ENCODE measurements at regions of chr11 and their contacts with region 1.

Region 1: DNA sequence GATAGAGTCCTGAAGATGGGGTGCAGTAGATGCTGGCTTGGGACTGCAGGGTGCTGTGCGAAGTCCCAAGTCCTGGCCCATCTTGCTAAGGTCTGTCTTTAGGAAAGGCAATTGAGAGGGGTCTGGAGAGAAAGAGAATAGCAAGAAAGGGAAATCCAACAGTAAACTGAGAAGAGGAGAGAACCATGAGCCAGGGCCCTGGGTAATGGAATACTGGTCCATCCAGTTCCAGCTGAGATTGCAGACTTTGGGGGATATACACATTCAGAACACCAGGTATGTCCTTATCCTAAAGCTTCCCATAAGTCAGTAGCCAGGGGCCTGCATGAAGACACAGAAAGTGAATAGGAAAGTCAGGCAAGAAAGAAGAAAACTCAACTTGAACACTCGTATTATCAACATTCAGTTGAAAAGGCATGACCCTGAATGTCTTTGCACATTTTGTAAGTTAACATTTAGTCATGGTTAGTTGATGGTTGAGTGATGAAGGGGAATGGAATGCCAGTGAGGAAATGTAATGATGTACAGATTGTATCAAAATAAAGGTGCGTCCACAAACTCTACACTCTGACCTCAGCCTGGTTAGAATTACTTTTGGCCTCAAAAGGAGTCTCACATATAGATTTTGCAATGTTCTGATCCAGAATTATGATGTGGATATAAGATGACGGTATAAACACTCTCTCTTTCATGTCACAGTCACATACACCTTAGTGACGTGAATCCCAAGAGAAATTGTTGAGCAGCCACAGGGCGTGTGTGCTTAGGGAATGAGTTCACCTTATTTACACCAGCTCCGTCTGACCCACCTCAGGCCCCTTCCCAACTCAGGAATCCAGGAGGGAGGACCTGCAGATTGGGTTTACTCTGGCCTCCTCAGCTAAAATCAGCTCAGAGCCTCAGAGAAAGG is 100.3 kb downstream of the RDX start:
- DNase-seq: peak; percentile 51 to 70
- H3K4me3 ChIP-seq: no peak overlapping the region
- H3K4me3 Mint-ChIP-seq: no peak overlapping the region
- H3K27ac Mint-ChIP-seq: peak overlapping the region; percentile 23
- H3K4me1 ChIP-seq: peaks cover 21% of the 10 kb centered on the region
- H3K4me1 Mint-ChIP-seq: peaks cover 29% of the 10 kb centered on the region
- H3K27me3 ChIP-seq: no peaks in the 10 kb centered on the region
- H3K27me3 Mint-ChIP-seq: no peaks in the 10 kb centered on the region
- CTCF ChIP-seq: no peak

Region 2: DNA sequence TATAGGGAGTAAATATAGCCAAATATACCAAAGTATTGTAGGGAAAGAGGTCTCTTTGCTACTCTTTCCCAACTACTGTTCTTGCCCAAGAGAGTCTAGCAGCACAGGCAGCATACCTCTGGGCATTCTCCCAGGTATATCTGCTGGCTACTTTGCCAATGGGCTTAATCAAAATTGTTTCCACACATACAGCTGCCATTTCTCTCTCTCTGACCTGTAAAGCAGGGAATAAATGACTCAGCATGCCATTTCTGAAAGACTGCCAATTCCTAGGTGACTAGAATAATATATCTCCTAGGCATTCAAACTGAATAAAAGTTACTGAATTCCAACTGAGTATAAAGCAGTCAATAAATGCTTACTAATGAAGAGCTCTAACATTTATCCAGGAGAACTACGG is 55.7 kb after region 1 on chr11:
- CTCF ChIA-PET with region 1: interaction called, 8 read pairs
- POLR2A ChIA-PET with region 1: no interaction called
- intact Hi-C with region 1: loop called (anchors 1 kb)
- DNase-seq: no peak
- H3K4me3 ChIP-seq: no peak overlapping the region
- H3K4me3 Mint-ChIP-seq: no peak overlapping the region
- H3K27ac Mint-ChIP-seq: no peak overlapping the region
- H3K4me1 ChIP-seq: no peaks in the 10 kb centered on the region
- H3K4me1 Mint-ChIP-seq: no peaks in the 10 kb centered on the region
- H3K27me3 ChIP-seq: no peaks in the 10 kb centered on the region
- H3K27me3 Mint-ChIP-seq: no peaks in the 10 kb centered on the region
- CTCF ChIP-seq: no peak

Region 3: GRCh38 chr11:110362971-110363509 is 166.9 kb after region 1 on chr11:
- CTCF ChIA-PET with region 1: interaction called, 11 read pairs
- POLR2A ChIA-PET with region 1: no interaction called
- intact Hi-C with region 1: loop called (anchors 1 kb)
- DNase-seq: peak; percentile 78 to 87
- H3K4me3 ChIP-seq: no peak overlapping the region
- H3K4me3 Mint-ChIP-seq: peak overlapping the region; percentile 61
- H3K27ac Mint-ChIP-seq: peak overlapping the region; percentile 91
- H3K4me1 ChIP-seq: peaks cover 38% of the 10 kb centered on the region
- H3K4me1 Mint-ChIP-seq: peaks cover 58% of the 10 kb centered on the region
- H3K27me3 ChIP-seq: no peaks in the 10 kb centered on the region
- H3K27me3 Mint-ChIP-seq: no peaks in the 10 kb centered on the region
- CTCF ChIP-seq: no peak

Region 4: DNA sequence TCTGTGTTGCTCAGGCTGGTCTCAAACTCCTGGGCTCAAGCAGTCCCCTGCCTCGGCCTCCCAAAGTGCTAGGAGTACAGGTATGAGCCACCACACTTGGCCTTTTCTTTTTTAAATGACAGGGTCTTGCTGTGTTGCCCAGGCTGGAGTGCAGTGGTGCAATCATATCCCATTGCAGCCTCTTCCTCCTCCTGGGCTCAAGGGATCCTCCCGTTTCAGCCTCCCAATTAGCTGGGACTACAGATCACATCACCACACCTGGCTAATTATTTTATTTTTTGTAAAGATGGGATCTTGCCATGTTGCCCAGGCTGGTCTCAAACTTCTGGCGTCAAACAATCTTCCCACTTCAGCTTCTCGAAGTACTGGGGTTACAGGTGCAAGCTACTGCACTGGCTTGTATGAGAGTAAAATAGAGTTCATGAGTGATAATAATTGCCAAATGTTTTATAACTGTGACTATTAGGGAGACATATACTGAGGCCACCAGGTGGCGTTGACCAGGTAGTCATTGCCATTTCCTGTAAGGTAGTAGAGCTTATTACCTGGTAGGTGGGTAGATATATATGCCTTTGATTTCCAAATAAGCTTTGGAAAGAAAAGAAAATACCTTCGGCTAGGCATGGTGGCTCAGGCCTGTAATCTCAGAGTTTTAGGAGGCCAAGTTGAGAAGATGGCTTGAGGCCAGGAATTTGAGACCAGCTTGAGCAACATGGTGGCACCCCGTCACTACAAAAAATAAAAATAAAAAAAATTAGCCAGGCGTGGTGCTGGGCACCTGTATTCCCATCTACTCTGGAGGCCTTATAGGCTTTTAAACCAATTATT is 239.1 kb after region 1 on chr11:
- CTCF ChIA-PET with region 1: interaction called, 27 read pairs
- POLR2A ChIA-PET with region 1: interaction called, 3 read pairs
- intact Hi-C with region 1: loop called (anchors 1 kb)
- DNase-seq: peak; percentile 58 to 64
- H3K4me3 ChIP-seq: no peak overlapping the region
- H3K4me3 Mint-ChIP-seq: no peak overlapping the region
- H3K27ac Mint-ChIP-seq: no peak overlapping the region
- H3K4me1 ChIP-seq: peaks cover 30% of the 10 kb centered on the region
- H3K4me1 Mint-ChIP-seq: peaks cover 33% of the 10 kb centered on the region
- H3K27me3 ChIP-seq: no peaks in the 10 kb centered on the region
- H3K27me3 Mint-ChIP-seq: no peaks in the 10 kb centered on the region
- CTCF ChIP-seq: peak; percentile 62 to 63

Region 5: GRCh38 chr11:111446404-111447111 is 1250.5 kb after region 1 on chr11:
- CTCF ChIA-PET with region 1: no interaction called
- POLR2A ChIA-PET with region 1: no interaction called
- intact Hi-C with region 1: loop called (anchors 1 kb)
- DNase-seq: peak; percentile 91
- H3K4me3 ChIP-seq: no peak overlapping the region
- H3K4me3 Mint-ChIP-seq: no peak overlapping the region
- H3K27ac Mint-ChIP-seq: no peak overlapping the region
- H3K4me1 ChIP-seq: no peaks in the 10 kb centered on the region; the same call in 1 of the 2 replicates
- H3K4me1 Mint-ChIP-seq: no peaks in the 10 kb centered on the region
- H3K27me3 ChIP-seq: peaks cover 2% of the 10 kb centered on the region; the same call in 1 of the 2 replicates
- H3K27me3 Mint-ChIP-seq: peaks cover 2% of the 10 kb centered on the region
- CTCF ChIP-seq: peak; percentile 96 to 99

Measured in Caco-2 (cell line).